GM12878 (cell line): ENCODE measurements at regions of chrX and their contacts with region 1.

Region 1: DNA sequence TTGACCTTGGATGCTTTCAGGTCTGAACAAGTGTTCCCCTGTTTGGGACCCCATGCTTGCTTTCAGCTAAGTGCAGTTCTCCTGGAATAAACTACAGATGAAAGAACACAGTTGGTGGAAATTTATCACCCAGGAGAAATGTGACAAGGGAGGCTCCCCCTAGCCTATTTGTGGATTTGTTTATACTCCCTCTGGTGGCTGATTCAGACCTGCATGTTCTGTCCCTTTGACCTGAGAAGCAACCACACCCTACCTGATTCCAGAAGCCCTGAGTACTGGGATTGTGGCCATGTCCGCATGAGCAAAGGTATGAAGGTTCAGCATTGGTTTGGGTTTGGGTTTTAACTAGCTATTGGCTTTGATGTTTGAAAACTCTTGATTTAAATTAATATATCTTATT is 440.9 kb downstream of the MID1IP1 start:
- DNase-seq: no peak
- ATAC-seq: peak; percentile 89
- H3K4me3 ChIP-seq: no peak overlapping the region
- H3K27ac ChIP-seq: no peak overlapping the region
- H3K4me1 ChIP-seq: peaks cover 4% of the 10 kb centered on the region; the same call in 1 of the 2 replicates
- H3K27me3 ChIP-seq: no peaks in the 10 kb centered on the region; a peak in 1 of 4 replicates
- CTCF ChIP-seq: peak; percentile 51 to 55 (median 54)
- EP300 ChIP-seq: no peak
- POLR2A ChIP-seq: no peak
- RAD21 ChIP-seq: peak; percentile 55

Region 2: GRCh38 chrX:38754102-38754790 is 487.9 kb before region 1 on chrX:
- CTCF ChIA-PET with region 1: interaction called, 5 read pairs
- POLR2A ChIA-PET with region 1: no interaction called
- RAD21 ChIA-PET with region 1: interaction called, 3 read pairs
- SMC1A ChIA-PET with region 1: interaction called, 3 read pairs
- in situ Hi-C with region 1: loop called (anchors 5 kb)
- intact Hi-C with region 1: loop called (anchors 2 kb)
- DNase-seq: peak; percentile 31
- ATAC-seq: peak; percentile 82
- H3K4me3 ChIP-seq: no peak overlapping the region
- H3K27ac ChIP-seq: no peak overlapping the region
- H3K4me1 ChIP-seq: no peaks in the 10 kb centered on the region
- H3K27me3 ChIP-seq: no peaks in the 10 kb centered on the region
- CTCF ChIP-seq: peak; percentile 59 to 70 (median 65); a peak in 5 of 6 replicates
- EP300 ChIP-seq: no peak
- POLR2A ChIP-seq: no peak
- RAD21 ChIP-seq: peak; percentile 79

Region 3: GRCh38 chrX:38985375-38985774 is 256.8 kb before region 1 on chrX:
- CTCF ChIA-PET with region 1: interaction called, 3 read pairs
- POLR2A ChIA-PET with region 1: no interaction called
- RAD21 ChIA-PET with region 1: no interaction called
- SMC1A ChIA-PET with region 1: no interaction called
- in situ Hi-C with region 1: no loop called
- intact Hi-C with region 1: loop called (anchors 5 kb)
- DNase-seq: no peak
- ATAC-seq: peak; percentile 84
- H3K4me3 ChIP-seq: no peak overlapping the region
- H3K27ac ChIP-seq: no peak overlapping the region
- H3K4me1 ChIP-seq: no peaks in the 10 kb centered on the region
- H3K27me3 ChIP-seq: no peaks in the 10 kb centered on the region
- CTCF ChIP-seq: peak in 2 of 3 experiments; percentile 15 to 22; a peak in 1 of 6 replicates
- EP300 ChIP-seq: no peak
- POLR2A ChIP-seq: no peak
- RAD21 ChIP-seq: peak; percentile 59

Region 4: GRCh38 chrX:39149761-39150160 is 92.4 kb before region 1 on chrX:
- CTCF ChIA-PET with region 1: interaction called, 53 read pairs
- POLR2A ChIA-PET with region 1: no interaction called
- RAD21 ChIA-PET with region 1: interaction called, 9 read pairs
- SMC1A ChIA-PET with region 1: interaction called, 47 read pairs
- in situ Hi-C with region 1: no loop called
- intact Hi-C with region 1: no loop called
- DNase-seq: no peak
- ATAC-seq: peak; percentile 76
- H3K4me3 ChIP-seq: no peak overlapping the region
- H3K27ac ChIP-seq: no peak overlapping the region
- H3K4me1 ChIP-seq: peaks cover 5% of the 10 kb centered on the region
- H3K27me3 ChIP-seq: no peaks in the 10 kb centered on the region
- CTCF ChIP-seq: peak; percentile 66 to 78 (median 74)
- EP300 ChIP-seq: no peak
- POLR2A ChIP-seq: no peak
- RAD21 ChIP-seq: peak; percentile 65

Region 5: GRCh38 chrX:39196192-39197102 is 45.7 kb before region 1 on chrX:
- CTCF ChIA-PET with region 1: interaction called, 16 read pairs
- POLR2A ChIA-PET with region 1: interaction called, 3 read pairs
- RAD21 ChIA-PET with region 1: interaction called, 28 read pairs
- SMC1A ChIA-PET with region 1: interaction called, 36 read pairs
- in situ Hi-C with region 1: no loop called
- intact Hi-C with region 1: no loop called
- DNase-seq: peak; percentile 90
- ATAC-seq: peak; percentile 95
- H3K4me3 ChIP-seq: no peak overlapping the region
- H3K27ac ChIP-seq: peak overlapping the region; percentile 54
- H3K4me1 ChIP-seq: peaks cover 18% of the 10 kb centered on the region
- H3K27me3 ChIP-seq: no peaks in the 10 kb centered on the region
- CTCF ChIP-seq: no peak
- EP300 ChIP-seq: peak; percentile 49 to 80; a peak in 3 of 4 replicates
- POLR2A ChIP-seq: no peak
- RAD21 ChIP-seq: no peak

Region 6: GRCh38 chrX:39772057-39772832 is 530.1 kb after region 1 on chrX:
- CTCF ChIA-PET with region 1: no interaction called
- POLR2A ChIA-PET with region 1: no interaction called
- RAD21 ChIA-PET with region 1: no interaction called
- SMC1A ChIA-PET with region 1: no interaction called
- in situ Hi-C with region 1: no loop called
- intact Hi-C with region 1: no loop called
- DNase-seq: no peak
- ATAC-seq: no peak
- H3K4me3 ChIP-seq: no peak overlapping the region
- H3K27ac ChIP-seq: no peak overlapping the region
- H3K4me1 ChIP-seq: 0 out of 2 replicates have a peak, but pooled peaks cover 7% of the 10 kb centered on the region
- H3K27me3 ChIP-seq: no peaks in the 10 kb centered on the region; a peak in 1 of 4 replicates
- CTCF ChIP-seq: no peak
- EP300 ChIP-seq: no peak
- POLR2A ChIP-seq: no peak
- RAD21 ChIP-seq: no peak